ENCODE measurements at regions of chr15 and their contacts with region 1.

Region 1: GRCh38 chr15:89003865-89004725 is 84.2 kb upstream of the ABHD2 start:
- DNase-seq: peak in 3 of 14 experiments; percentile 15 to 29 (median 23)
- ATAC-seq: no peak
- H3K4me3 ChIP-seq: no peak overlapping the region
- H3K4me3 Mint-ChIP-seq: no peak overlapping the region
- H3K27ac ChIP-seq: no peak overlapping the region
- H3K27ac Mint-ChIP-seq: no peak overlapping the region
- H3K4me1 ChIP-seq: no peaks in the 10 kb centered on the region
- H3K4me1 Mint-ChIP-seq: no peaks in the 10 kb centered on the region
- H3K27me3 ChIP-seq: no peaks in the 10 kb centered on the region
- H3K27me3 Mint-ChIP-seq: peaks cover 9% of the 10 kb centered on the region
- CTCF ChIP-seq: no peak

Region 2: DNA sequence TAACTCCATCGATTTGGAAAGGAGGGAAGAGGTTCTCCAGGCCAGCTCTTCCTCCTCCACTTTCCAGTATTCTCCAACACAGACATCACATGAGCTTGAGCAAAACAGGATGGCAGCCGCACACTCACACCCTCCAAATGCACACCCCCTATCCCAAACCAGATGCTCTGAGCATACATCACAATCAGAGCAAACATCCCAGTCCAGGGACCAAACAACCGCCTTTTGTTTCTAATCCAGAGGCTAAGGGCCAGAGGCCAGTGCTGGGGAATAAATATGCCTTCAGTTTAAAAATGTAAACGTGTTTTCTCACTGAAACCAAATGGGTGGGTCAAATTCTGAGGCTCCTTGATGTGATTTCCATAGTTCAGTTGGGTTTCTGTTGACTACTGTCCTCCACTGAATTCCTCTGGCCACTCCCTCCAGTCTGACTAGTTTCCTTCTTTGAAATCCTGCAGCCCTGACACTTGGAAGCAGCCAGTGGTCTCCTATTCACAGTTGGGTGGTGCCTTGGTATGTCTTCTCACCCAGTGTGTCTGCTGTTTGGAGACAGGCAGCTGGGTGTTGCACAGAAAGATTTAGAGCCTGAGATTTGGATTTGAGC is 71.7 kb before region 1 on chr15:
- CTCF ChIA-PET with region 1: no interaction called
- POLR2A ChIA-PET with region 1: no interaction called
- intact Hi-C with region 1: loop called in 1 of 2 experiments (anchors 5 kb)
- DNase-seq: no peak
- ATAC-seq: no peak
- H3K4me3 ChIP-seq: no peak overlapping the region
- H3K4me3 Mint-ChIP-seq: no peak overlapping the region
- H3K27ac ChIP-seq: no peak overlapping the region
- H3K27ac Mint-ChIP-seq: no peak overlapping the region
- H3K4me1 ChIP-seq: no peaks in the 10 kb centered on the region
- H3K4me1 Mint-ChIP-seq: no peaks in the 10 kb centered on the region
- H3K27me3 ChIP-seq: peaks cover 4 to 5% of the 10 kb centered on the region in 2 experiments
- H3K27me3 Mint-ChIP-seq: peaks cover 26% of the 10 kb centered on the region
- CTCF ChIP-seq: no peak